ENCODE measurements at regions of chr12 and their contacts with region 1.

Region 1: GRCh38 chr12:25993901-25994651 is 35.6 kb downstream of the RASSF8 start:
- DNase-seq: no peak
- H3K4me3 ChIP-seq: no peak overlapping the region
- H3K27ac ChIP-seq: no peak overlapping the region
- H3K4me1 ChIP-seq: peaks cover 36% of the 10 kb centered on the region
- H3K27me3 ChIP-seq: no peaks in the 10 kb centered on the region
- CTCF ChIP-seq: no peak

Region 2: DNA sequence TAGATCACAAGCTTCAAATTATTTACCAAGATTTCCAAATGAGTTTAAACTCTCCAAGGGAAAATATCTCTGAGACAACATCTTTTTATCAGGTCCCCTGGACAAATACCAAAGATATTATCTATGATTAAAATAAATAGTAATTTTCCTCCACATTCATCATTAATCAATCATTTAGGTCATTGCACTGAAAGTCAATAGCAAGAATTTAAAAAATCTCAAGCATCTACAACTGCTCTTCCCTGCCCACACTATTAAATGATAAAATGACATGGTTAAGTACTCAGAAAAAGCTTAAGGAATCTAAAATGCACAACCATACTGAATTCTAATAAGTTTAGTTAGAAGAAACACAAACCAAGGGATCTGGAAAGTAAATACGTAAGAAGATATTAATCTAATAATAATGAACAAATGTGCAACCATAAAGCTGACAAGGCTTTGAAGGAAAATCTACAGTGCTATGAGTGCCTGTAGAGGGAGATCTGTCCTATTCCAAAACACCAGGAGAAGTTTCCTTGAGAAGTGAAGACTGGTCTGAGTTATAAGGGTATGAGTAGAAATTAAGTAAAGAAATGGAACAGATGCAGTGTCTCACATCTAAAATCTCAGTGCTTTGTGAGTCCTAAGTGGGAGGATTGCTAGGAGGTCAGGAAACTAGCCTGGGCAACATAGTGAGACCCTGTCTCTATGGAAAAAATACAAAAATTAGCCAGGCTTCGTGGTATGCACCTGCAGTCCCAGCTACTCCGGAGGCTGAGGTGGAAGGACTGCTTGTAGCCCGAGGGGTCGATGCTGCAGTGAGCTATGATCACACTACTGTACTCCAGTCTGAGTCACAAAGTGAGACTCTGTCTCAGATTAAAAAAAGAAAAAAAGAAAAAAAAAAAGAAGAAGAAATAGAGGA is 924.5 kb after region 1 on chr12:
- CTCF ChIA-PET with region 1: no interaction called
- POLR2A ChIA-PET with region 1: interaction called, 14 read pairs
- intact Hi-C with region 1: no loop called
- DNase-seq: peak; percentile 4
- H3K4me3 ChIP-seq: no peak overlapping the region
- H3K27ac ChIP-seq: peak overlapping the region; percentile 30
- H3K4me1 ChIP-seq: peaks cover 4% of the 10 kb centered on the region
- H3K27me3 ChIP-seq: no peaks in the 10 kb centered on the region
- CTCF ChIP-seq: 0 out of 2 replicates have a peak, but pooled peaks have one; percentile 37

Measured in A673 (cell line).